Transverse colon (tissue), 4 donors: ENCODE measurements at regions of chr22 and their contacts with region 1.

Region 1: GRCh38 chr22:46105494-46106278 is 44.6 kb upstream of the PPARA start:
- DNase-seq: peak; percentile 69
- H3K4me3 ChIP-seq: no peak overlapping the region
- H3K27ac ChIP-seq: peak overlapping the region; percentile 75 to 82 (median 77)
- H3K4me1 ChIP-seq: peaks cover 54 to 77% (median 61%) of the 10 kb centered on the region in 4 donors
- H3K27me3 ChIP-seq: no peaks in the 10 kb centered on the region
- CTCF ChIP-seq: no peak
- EP300 ChIP-seq: peak; percentile 40
- POLR2A ChIP-seq: no peak

Region 2: GRCh38 chr22:45948081-45948648 is 157.5 kb before region 1 on chr22:
- in situ Hi-C with region 1: no loop called
- intact Hi-C with region 1: no loop called
- DNase-seq: no peak
- H3K4me3 ChIP-seq: no peak overlapping the region
- H3K27ac ChIP-seq: no peak overlapping the region
- H3K4me1 ChIP-seq: no peaks in the 10 kb centered on the region
- H3K27me3 ChIP-seq: peaks cover 12% of the 10 kb centered on the region
- CTCF ChIP-seq: no peak
- EP300 ChIP-seq: no peak
- POLR2A ChIP-seq: no peak

Region 3: GRCh38 chr22:46087336-46088277 is 18.1 kb before region 1 on chr22:
- in situ Hi-C with region 1: no loop called
- intact Hi-C with region 1: loop called (anchors 2 kb)
- DNase-seq: peak; percentile 80
- H3K4me3 ChIP-seq: peak overlapping the region in 1 of 4 donors; percentile 20
- H3K27ac ChIP-seq: peak overlapping the region; percentile 98 to 99 (median 98)
- H3K4me1 ChIP-seq: peaks cover 66 to 92% (median 79%) of the 10 kb centered on the region in 4 donors
- H3K27me3 ChIP-seq: no peaks in the 10 kb centered on the region
- CTCF ChIP-seq: no peak
- EP300 ChIP-seq: no peak
- POLR2A ChIP-seq: no peak